CD8-positive, alpha-beta memory T cell (primary cell): ENCODE measurements at regions of chr9 and their contacts with region 1.

Region 1: GRCh38 chr9:130866474-130866965 is 30.1 kb downstream of the QRFP start:
- DNase-seq: peak in 3 of 5 donors; percentile 10 to 31 (median 13)
- H3K4me3 ChIP-seq: no peak overlapping the region
- H3K4me3 Mint-ChIP-seq: no peak overlapping the region
- H3K27ac ChIP-seq: no peak overlapping the region
- H3K27ac Mint-ChIP-seq: peak overlapping the region in 3 of 8 donors; percentile 30 to 86 (median 60)
- H3K4me1 ChIP-seq: peaks cover 2% of the 10 kb centered on the region
- H3K4me1 Mint-ChIP-seq: peaks cover 4 to 13% (median 7%) of the 10 kb centered on the region in 3 donors
- H3K27me3 ChIP-seq: no peaks in the 10 kb centered on the region
- H3K27me3 Mint-ChIP-seq: peaks cover 0 to 1% of the 10 kb centered on the region in 2 donors

Region 2: GRCh38 chr9:130701056-130702022 is 165.2 kb before region 1 on chr9:
- CTCF ChIA-PET with region 1: interaction called, 24 read pairs
- POLR2A ChIA-PET with region 1: no interaction called
- DNase-seq: peak; percentile 52 to 74 (median 61)
- H3K4me3 ChIP-seq: no peak overlapping the region
- H3K4me3 Mint-ChIP-seq: no peak overlapping the region
- H3K27ac ChIP-seq: no peak overlapping the region
- H3K27ac Mint-ChIP-seq: peak overlapping the region in 3 of 8 donors; percentile 11 to 29 (median 21)
- H3K4me1 ChIP-seq: no peaks in the 10 kb centered on the region
- H3K4me1 Mint-ChIP-seq: peaks cover 12 to 33% (median 15%) of the 10 kb centered on the region in 3 donors
- H3K27me3 ChIP-seq: no peaks in the 10 kb centered on the region
- H3K27me3 Mint-ChIP-seq: no peaks in the 10 kb centered on the region

Region 3: GRCh38 chr9:130854092-130854491 is 12.4 kb before region 1 on chr9:
- CTCF ChIA-PET with region 1: interaction called, 11 read pairs
- POLR2A ChIA-PET with region 1: no interaction called
- DNase-seq: no peak
- H3K4me3 ChIP-seq: no peak overlapping the region
- H3K4me3 Mint-ChIP-seq: no peak overlapping the region
- H3K27ac ChIP-seq: no peak overlapping the region
- H3K27ac Mint-ChIP-seq: no peak overlapping the region
- H3K4me1 ChIP-seq: no peaks in the 10 kb centered on the region
- H3K4me1 Mint-ChIP-seq: peaks cover 5 to 6% (median 6%) of the 10 kb centered on the region in 3 donors
- H3K27me3 ChIP-seq: no peaks in the 10 kb centered on the region
- H3K27me3 Mint-ChIP-seq: no peaks in the 10 kb centered on the region